ENCODE measurements at regions of chr16 and their contacts with region 1.

Region 1: DNA sequence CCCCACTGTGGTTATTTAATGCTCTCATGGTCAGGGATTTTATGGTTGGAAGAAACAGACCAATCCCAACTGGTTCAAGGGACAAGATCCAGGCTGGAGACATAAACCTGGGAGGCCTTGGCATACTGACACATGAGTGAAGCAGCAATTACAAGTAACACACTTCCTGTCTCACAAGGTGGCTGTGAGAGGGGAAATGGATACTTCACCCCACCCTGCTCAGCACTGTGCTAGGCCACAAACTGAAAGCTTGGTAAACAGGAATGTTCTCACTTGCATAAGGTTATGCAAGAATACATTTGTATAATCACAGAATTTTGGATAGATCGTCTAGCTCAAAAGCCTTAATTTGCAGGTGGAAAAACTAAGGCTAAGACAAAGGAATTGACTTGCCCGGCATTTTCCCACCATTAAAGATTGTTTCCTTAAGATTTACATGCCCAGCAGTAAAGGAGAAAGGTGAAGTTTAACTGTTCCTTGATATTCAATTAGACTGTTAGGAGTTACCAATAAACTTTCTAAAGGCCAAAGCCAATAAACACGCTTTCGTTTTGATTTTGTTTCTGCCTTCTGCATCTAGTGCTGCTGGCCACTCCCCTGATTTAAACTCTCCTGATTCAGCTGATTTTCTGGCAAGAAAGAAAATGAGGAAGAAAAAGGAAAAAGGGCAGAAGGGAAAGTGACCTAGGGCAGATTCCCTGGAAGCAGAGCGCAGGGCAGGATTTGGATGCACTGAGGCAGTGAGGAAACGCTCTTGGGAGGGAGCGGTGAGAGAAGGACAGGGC is 215.6 kb upstream of the CDH5 start:
- DNase-seq: no peak
- H3K4me3 ChIP-seq: no peak overlapping the region
- H3K4me3 Mint-ChIP-seq: peak overlapping the region; percentile 56
- H3K27ac Mint-ChIP-seq: peak overlapping the region; percentile 84
- H3K4me1 ChIP-seq: peaks cover 48% of the 10 kb centered on the region
- H3K4me1 Mint-ChIP-seq: peaks cover 33% of the 10 kb centered on the region
- H3K27me3 ChIP-seq: no peaks in the 10 kb centered on the region
- H3K27me3 Mint-ChIP-seq: no peaks in the 10 kb centered on the region
- CTCF ChIP-seq: no peak

Region 2: DNA sequence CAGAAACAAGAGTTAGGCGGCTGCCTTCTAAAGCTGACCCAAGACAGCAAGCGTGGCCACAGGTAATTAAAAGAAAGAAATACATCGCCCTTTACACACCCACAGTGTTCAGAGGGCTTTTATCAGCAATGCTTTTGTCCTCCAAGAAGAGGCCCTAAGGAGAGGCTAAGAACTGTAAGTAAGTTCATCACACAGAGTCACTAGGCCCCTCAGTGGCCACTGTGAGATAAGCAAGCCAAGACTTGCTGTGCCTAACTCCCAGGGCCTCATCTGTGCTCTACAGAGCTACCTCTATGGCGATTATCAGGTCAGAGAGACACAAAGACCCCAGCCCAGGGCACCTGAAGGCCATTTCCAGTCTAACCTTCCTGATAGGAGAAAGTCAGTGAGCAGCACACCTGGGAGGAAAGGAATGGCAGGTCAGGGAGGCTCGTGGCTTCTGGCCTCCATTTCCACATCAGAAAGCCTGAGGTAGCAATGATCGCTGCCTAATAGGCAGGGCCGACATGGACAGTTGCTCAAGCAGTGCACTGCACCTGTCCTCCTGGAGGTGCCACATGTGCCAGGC is 483.8 kb before region 1 on chr16:
- CTCF ChIA-PET with region 1: no interaction called
- POLR2A ChIA-PET with region 1: no interaction called
- intact Hi-C with region 1: loop called (anchors 5 kb)
- DNase-seq: peak in 1 of 2 experiments; percentile 19
- H3K4me3 ChIP-seq: no peak overlapping the region
- H3K4me3 Mint-ChIP-seq: no peak overlapping the region
- H3K27ac Mint-ChIP-seq: peak overlapping the region; percentile 39
- H3K4me1 ChIP-seq: peaks cover 16% of the 10 kb centered on the region
- H3K4me1 Mint-ChIP-seq: peaks cover 13% of the 10 kb centered on the region
- H3K27me3 ChIP-seq: no peaks in the 10 kb centered on the region
- H3K27me3 Mint-ChIP-seq: no peaks in the 10 kb centered on the region
- CTCF ChIP-seq: no peak

Region 3: GRCh38 chr16:66135838-66136237 is 15.1 kb before region 1 on chr16:
- CTCF ChIA-PET with region 1: no interaction called
- POLR2A ChIA-PET with region 1: interaction called, 4 read pairs
- intact Hi-C with region 1: loop called (anchors 2 kb)
- DNase-seq: no peak
- H3K4me3 ChIP-seq: no peak overlapping the region
- H3K4me3 Mint-ChIP-seq: no peak overlapping the region
- H3K27ac Mint-ChIP-seq: peak overlapping the region; percentile 40
- H3K4me1 ChIP-seq: peaks cover 9% of the 10 kb centered on the region; the same call in 1 of the 2 replicates
- H3K4me1 Mint-ChIP-seq: no peaks in the 10 kb centered on the region
- H3K27me3 ChIP-seq: no peaks in the 10 kb centered on the region
- H3K27me3 Mint-ChIP-seq: peaks cover 7% of the 10 kb centered on the region
- CTCF ChIP-seq: no peak

Region 4: DNA sequence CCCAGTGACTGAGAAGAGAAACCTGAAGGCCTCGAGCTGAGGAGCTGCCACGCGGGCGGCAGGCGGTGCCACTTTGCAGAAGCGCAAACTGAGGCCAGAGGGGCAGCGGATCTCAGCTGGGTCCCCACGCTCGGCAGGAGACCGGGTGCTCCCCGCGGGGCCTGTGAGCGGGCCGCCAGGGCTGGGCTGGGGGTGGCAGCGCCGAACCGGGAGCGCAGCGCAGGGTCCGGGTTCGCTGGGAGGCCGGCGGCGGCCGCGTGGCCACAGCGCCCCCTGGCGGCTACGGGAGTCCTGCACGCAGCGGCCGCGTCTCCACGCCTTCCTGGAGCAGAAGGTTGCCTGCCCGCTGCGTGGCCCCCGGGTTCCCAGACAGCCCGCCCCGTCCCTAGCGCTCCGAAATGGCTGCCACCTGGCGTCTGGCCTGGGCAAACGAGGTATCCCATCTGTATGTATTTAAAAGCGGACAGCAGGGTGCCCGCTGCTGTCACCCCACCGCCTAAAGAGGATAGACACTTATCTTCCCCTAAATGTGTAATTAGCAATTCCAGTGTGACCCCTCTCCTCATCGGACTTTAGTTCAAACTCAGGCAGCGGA is 119.5 kb after region 1 on chr16:
- CTCF ChIA-PET with region 1: interaction called, 3 read pairs
- POLR2A ChIA-PET with region 1: no interaction called
- intact Hi-C with region 1: loop called (anchors 2 kb)
- DNase-seq: peak; percentile 75 to 92
- H3K4me3 ChIP-seq: peak overlapping the region; percentile 26
- H3K4me3 Mint-ChIP-seq: peak overlapping the region; percentile 65
- H3K27ac Mint-ChIP-seq: no peak overlapping the region
- H3K4me1 ChIP-seq: 0 out of 2 replicates have a peak, but pooled peaks cover 13% of the 10 kb centered on the region
- H3K4me1 Mint-ChIP-seq: peaks cover 14% of the 10 kb centered on the region
- H3K27me3 ChIP-seq: no peaks in the 10 kb centered on the region
- H3K27me3 Mint-ChIP-seq: no peaks in the 10 kb centered on the region
- CTCF ChIP-seq: peak; percentile 84 to 99

Region 5: GRCh38 chr16:66326991-66327513 is 176.2 kb after region 1 on chr16:
- CTCF ChIA-PET with region 1: interaction called, 3 read pairs
- POLR2A ChIA-PET with region 1: interaction called, 5 read pairs
- intact Hi-C with region 1: loop called (anchors 1 kb)
- DNase-seq: peak; percentile 82
- H3K4me3 ChIP-seq: no peak overlapping the region
- H3K4me3 Mint-ChIP-seq: peak overlapping the region; percentile 28
- H3K27ac Mint-ChIP-seq: peak overlapping the region; percentile 92
- H3K4me1 ChIP-seq: peaks cover 25% of the 10 kb centered on the region
- H3K4me1 Mint-ChIP-seq: peaks cover 14% of the 10 kb centered on the region
- H3K27me3 ChIP-seq: no peaks in the 10 kb centered on the region
- H3K27me3 Mint-ChIP-seq: no peaks in the 10 kb centered on the region
- CTCF ChIP-seq: no peak

Region 6: DNA sequence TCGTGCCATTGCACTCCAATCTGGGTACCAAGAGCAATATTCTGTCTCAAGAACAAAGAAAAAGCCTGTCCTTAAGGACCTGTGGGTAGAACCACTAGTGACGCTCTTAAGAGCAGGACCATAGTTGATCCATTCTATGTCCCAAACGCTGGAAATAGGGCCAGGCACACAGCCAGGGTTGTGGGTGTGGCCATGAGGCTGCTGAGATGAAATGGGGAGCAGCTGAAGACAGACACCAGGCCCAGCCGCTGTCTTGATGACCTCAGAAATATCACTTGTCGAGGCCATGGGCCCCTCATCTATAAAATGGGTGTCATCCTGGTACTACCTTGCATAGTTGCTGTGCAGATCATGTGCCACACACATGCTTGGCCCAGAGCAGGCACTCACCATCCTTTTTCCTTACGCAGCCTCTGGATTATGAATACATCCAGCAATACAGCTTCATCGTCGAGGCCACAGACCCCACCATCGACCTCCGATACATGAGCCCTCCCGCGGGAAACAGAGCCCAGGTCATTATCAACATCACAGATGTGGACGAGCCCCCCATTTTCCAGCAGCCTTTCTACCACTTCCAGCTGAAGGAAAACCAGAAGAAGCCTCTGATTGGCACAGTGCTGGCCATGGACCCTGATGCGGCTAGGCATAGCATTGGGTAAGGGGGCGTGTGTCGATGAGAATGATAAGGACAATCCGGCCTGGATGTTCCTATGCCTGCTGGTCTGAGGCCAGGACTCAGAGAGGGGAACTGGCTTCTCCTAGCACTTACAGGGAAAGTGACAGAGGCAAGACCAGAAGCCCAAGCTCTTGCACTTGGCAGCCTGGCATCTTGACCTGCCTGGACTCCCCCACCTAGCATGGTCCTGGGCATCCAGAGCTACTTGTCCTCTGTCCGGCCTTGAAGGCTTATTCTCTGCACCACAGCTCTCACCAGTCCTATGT is 241.1 kb after region 1 on chr16:
- CTCF ChIA-PET with region 1: no interaction called
- POLR2A ChIA-PET with region 1: no interaction called
- intact Hi-C with region 1: no loop called
- DNase-seq: no peak
- H3K4me3 ChIP-seq: no peak overlapping the region
- H3K4me3 Mint-ChIP-seq: no peak overlapping the region
- H3K27ac Mint-ChIP-seq: no peak overlapping the region
- H3K4me1 ChIP-seq: no peaks in the 10 kb centered on the region
- H3K4me1 Mint-ChIP-seq: no peaks in the 10 kb centered on the region
- H3K27me3 ChIP-seq: no peaks in the 10 kb centered on the region
- H3K27me3 Mint-ChIP-seq: peaks cover 4% of the 10 kb centered on the region
- CTCF ChIP-seq: no peak

Measured in Caco-2 (cell line).